MCF 10A (cell line): ENCODE measurements at regions of chr9 and their contacts with region 1.

Region 1: GRCh38 chr9:110623462-110624025 is 44.0 kb upstream of the SVEP1 start:
- DNase-seq: peak; percentile 77
- H3K4me3 Mint-ChIP-seq: no peak overlapping the region
- H3K27ac Mint-ChIP-seq: no peak overlapping the region
- H3K4me1 Mint-ChIP-seq: no peaks in the 10 kb centered on the region
- H3K27me3 Mint-ChIP-seq: no peaks in the 10 kb centered on the region
- CTCF ChIP-seq: peak; percentile 60

Region 2: DNA sequence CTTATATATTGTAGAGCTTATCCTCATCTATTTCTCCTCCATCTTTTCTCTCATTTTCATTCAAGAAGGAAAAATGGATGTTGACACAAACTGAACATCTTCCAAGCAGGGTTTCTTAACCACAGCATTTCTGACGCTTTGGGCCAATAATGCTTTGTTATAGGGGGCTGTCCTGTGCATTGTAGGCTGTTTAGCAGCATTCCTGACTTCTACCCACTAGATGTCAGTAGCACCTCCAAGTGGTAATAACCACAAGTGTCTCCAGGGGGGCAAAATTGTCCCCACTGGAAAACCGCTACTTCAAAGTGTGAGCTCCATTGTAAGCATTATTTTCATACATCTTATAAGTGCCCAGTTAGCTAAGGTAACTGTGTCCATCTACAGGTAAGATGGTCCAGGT is 283.2 kb before region 1 on chr9:
- CTCF ChIA-PET with region 1: interaction called, 3 read pairs
- POLR2A ChIA-PET with region 1: no interaction called
- intact Hi-C with region 1: loop called (anchors 1 kb)
- DNase-seq: peak; percentile 24
- H3K4me3 Mint-ChIP-seq: no peak overlapping the region
- H3K27ac Mint-ChIP-seq: no peak overlapping the region
- H3K4me1 Mint-ChIP-seq: no peaks in the 10 kb centered on the region
- H3K27me3 Mint-ChIP-seq: no peaks in the 10 kb centered on the region
- CTCF ChIP-seq: peak; percentile 45

Region 3: GRCh38 chr9:110452227-110452801 is 171.2 kb before region 1 on chr9:
- CTCF ChIA-PET with region 1: interaction called, 13 read pairs
- POLR2A ChIA-PET with region 1: interaction called, 3 read pairs
- intact Hi-C with region 1: loop called (anchors 1 kb)
- DNase-seq: peak; percentile 43
- H3K4me3 Mint-ChIP-seq: no peak overlapping the region
- H3K27ac Mint-ChIP-seq: no peak overlapping the region
- H3K4me1 Mint-ChIP-seq: no peaks in the 10 kb centered on the region
- H3K27me3 Mint-ChIP-seq: no peaks in the 10 kb centered on the region
- CTCF ChIP-seq: peak; percentile 47

Region 4: DNA sequence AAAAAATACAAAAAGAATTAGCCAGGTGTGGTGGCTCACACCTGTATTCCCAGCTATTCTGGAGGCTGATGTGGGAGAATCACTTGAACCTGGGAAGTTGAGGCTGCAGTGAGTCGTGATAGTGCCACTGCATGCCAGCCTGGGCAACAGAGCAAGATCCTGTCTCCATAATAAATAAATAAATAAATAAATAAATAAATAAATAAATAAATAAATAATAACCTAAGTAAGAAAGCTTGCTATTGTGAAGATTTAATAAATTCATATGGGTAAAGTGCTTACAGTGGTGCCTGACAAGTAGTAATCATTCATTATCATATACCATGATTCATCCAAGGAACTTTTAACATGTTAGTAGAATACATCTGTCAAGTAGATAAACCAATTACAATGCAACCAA is 57.4 kb before region 1 on chr9:
- CTCF ChIA-PET with region 1: no interaction called
- POLR2A ChIA-PET with region 1: no interaction called
- intact Hi-C with region 1: no loop called
- DNase-seq: no peak
- H3K4me3 Mint-ChIP-seq: no peak overlapping the region
- H3K27ac Mint-ChIP-seq: no peak overlapping the region
- H3K4me1 Mint-ChIP-seq: peaks cover 9% of the 10 kb centered on the region
- H3K27me3 Mint-ChIP-seq: no peaks in the 10 kb centered on the region
- CTCF ChIP-seq: no peak

Region 5: GRCh38 chr9:110604171-110604601 is 19.4 kb before region 1 on chr9:
- CTCF ChIA-PET with region 1: interaction called, 15 read pairs
- POLR2A ChIA-PET with region 1: interaction called, 3 read pairs
- intact Hi-C with region 1: no loop called
- DNase-seq: no peak
- H3K4me3 Mint-ChIP-seq: no peak overlapping the region
- H3K27ac Mint-ChIP-seq: no peak overlapping the region
- H3K4me1 Mint-ChIP-seq: peaks cover 10% of the 10 kb centered on the region
- H3K27me3 Mint-ChIP-seq: no peaks in the 10 kb centered on the region
- CTCF ChIP-seq: no peak